ENCODE measurements at regions of chr1 and their contacts with region 1.

Region 1: GRCh38 chr1:206725109-206725963 is 40.6 kb downstream of the MAPKAPK2 start:
- DNase-seq: peak; percentile 69
- ATAC-seq: peak; percentile 47
- H3K4me3 ChIP-seq: no peak overlapping the region
- H3K27ac ChIP-seq: no peak overlapping the region; the same call in 1 of the 2 replicates
- H3K4me1 ChIP-seq: peaks cover 29% of the 10 kb centered on the region
- H3K27me3 ChIP-seq: no peaks in the 10 kb centered on the region
- CTCF ChIP-seq: peak; percentile 89

Region 2: DNA sequence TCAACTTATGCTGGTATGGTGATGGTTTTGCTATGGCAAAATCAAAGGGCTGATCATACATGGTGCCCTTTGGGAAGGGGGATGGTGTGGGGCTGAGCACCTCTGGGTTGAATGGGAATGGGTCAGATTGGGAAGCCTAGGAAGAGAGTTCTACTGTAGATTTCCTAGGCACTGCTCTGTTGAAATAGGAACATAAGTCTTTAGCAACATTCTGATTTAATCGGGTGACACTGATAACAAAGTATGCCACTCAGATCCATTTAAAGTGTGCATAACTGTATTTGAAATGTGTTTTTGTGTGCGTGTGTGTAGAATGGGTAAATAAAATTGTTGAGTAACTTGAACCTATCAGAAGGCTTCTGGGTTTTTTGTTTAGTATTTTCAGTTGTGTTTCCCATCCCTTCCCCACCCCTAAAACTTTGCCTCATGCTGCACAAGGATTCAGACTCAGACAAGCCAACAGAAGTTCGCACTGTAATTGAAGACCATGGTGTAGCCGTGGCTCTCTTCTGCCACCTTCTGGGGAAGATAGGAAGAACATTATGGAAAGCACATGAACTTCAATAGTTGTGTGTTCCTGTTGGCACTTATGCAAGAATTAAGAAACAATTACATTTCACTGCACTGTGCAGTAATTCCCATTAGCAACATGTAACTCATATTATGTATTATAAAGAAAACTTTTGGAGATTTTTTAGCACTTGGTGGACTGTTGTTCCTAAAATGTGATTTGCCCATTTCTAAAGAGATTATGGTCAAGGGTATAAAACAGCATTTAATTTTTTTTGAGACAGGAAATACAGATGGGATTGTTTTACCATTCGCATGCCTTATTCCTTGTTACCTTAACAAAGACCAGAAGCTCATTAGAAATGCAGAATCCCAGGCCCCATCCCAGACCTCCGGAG is 352.4 kb after region 1 on chr1:
- CTCF ChIA-PET with region 1: no interaction called
- POLR2A ChIA-PET with region 1: no interaction called
- intact Hi-C with region 1: loop called (anchors 5 kb)
- DNase-seq: peak; percentile 98
- ATAC-seq: peak; percentile 68
- H3K4me3 ChIP-seq: no peak overlapping the region
- H3K27ac ChIP-seq: peak overlapping the region; percentile 3; the same call in 1 of the 2 replicates
- H3K4me1 ChIP-seq: peaks cover 37% of the 10 kb centered on the region
- H3K27me3 ChIP-seq: no peaks in the 10 kb centered on the region
- CTCF ChIP-seq: peak; percentile 99

Region 3: DNA sequence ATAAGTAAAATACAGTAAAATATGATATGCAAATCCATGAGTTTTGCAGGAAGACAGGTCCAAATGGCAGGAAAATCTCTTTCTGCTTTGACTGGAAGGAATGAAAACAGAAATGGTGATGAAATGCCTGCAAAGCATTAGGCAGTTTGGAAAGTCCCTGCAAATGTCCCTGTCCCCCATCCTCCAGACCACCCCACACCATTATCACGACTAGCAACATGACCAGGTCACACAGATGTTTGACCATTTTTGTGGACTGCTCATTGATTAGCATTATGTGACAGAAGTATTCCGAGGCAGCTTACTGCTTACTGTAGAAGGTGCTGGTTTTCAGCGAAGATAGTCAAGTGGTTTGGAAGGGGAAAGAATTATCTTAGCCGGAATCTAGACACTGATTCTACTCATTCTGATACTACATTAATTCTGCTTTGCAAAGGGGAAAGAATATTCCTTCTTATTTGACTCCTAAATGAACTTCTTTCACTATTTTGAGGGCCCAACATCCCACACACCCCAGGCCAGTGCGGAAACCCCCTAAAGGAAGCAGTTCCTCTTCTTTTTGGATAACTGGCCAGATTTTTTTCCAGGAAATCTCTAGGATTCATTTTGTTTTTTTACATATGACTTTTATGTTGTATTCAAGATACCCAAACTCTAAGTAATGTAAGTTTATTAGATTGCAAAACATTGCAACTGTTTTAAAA is 719.3 kb after region 1 on chr1:
- CTCF ChIA-PET with region 1: no interaction called
- POLR2A ChIA-PET with region 1: no interaction called
- intact Hi-C with region 1: no loop called
- DNase-seq: no peak
- ATAC-seq: no peak
- H3K4me3 ChIP-seq: no peak overlapping the region
- H3K27ac ChIP-seq: no peak overlapping the region
- H3K4me1 ChIP-seq: no peaks in the 10 kb centered on the region
- H3K27me3 ChIP-seq: peaks cover 88% of the 10 kb centered on the region
- CTCF ChIP-seq: no peak

Measured in PC-3 (cell line).